ACHN (cell line): ENCODE measurements at regions of chr12 and their contacts with region 1.

Region 1: DNA sequence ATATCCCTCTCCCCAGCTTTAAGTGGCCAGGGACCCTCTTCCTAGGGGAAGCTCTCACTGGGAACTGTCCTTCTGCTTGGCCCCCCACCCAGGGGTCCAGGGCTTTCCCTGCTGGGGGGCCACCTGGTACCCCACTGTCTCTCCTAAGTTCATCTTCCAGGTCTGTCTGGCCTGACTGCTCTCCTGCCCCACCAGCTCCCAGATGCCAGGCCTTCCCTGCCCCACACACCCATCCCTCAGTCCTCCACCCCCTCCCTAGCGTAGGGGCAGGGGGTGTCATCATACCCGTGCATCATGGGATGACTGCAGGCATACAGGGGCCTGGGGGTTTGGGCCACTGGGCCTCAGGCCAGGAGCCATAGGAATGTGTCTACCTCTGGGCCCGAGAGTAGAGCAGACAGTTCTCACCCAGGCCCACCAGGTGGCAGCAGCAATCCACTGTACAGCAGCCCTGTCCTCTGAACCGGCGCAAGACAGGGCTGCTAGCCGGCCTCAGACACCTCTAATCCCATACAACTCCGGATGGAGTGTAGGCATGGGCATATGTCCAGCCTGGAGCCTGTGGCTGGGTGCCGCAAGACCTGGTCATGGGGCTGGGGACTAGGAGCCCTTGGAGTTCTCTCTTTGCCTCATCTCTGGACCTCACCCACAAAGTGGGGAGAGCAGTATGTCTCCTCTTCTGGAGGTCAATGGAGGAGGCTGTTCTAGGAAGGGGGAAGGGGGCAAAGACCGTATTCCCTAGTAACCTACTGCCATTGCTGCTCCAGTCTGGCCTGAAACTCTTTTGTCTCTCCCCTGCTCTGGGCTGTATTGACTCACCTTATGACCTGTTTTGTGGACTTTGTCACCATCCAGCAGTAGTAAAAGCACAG is 10.0 kb upstream of the SMARCD1 start:
- DNase-seq: peak; percentile 89

Region 2: DNA sequence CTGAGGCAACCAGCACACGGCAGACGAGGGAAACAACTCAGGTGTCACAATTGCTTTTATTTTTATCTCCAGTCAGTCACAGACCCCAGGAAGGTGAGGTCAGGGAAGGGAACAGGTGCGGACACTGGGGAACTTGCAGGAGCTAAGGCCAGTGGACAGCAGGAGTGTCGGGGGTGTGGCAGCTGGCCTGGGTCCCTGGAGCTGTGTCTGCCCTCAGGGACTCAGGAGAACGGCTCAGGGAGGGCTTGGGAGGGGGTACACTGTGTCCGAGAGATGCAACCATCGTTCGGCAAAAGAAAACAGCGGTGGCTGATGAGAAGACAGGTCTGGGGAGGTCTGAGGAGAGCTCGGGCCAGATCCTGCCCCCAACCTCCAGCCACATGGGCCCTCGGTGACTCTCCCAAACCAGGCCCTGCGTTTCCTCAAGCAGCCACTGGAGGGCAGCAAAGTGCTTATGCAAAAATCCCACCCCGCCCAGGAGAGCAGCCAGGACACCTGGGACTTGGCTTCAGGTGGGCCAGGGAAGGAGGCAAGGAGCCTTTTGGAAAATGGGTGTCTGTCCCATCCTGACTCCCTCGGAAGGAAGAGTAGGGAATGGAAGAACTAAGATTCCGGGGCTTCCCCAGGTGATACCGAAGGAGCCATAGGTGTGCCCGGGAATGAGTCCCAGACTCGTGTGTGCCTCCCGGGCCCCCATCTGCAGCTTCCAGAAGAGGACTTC is 208.2 kb before region 1 on chr12:
- in situ Hi-C with region 1: loop called (anchors 25 kb)
- DNase-seq: peak; percentile 73

Region 3: DNA sequence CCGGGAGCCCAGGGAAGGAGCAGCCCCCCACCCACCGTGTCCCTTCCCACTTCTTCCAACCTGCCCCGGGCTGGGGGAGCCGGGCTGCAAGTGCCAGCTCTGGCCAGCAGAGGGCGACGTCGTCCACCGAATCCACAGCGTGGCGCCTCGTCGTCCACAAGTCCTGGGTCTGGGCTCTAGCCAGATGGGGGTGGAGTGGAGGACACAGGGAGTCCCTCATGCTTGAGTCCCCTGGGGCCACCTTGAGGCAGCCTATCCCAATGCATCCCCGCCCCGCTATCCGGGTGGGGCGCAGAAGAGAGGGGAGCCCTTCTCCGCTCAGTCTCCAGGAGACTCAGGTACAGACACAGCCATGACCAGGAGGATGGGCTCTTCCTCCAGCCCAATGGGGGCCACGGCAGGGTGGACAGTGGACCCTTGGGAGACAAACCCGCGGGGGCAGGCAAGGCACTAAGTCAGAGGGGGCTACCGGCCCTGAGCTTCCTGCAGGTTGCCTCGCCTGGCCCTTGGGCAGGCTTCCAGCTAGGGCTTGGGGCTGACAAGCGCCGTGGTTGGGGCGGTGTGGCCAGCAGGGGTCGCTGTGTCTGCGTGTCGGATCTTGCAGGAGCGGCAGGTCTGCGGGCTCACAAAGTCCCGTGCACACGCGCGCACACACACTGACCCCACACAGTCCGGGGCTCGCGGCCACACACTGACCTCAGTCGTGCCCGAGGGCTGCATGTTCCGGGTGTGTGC is 108.0 kb before region 1 on chr12:
- in situ Hi-C with region 1: loop called (anchors 25 kb)
- DNase-seq: peak; percentile 87